HEK293 (cell line): ENCODE measurements at regions of chr11 and their contacts with region 1.

Region 1: DNA sequence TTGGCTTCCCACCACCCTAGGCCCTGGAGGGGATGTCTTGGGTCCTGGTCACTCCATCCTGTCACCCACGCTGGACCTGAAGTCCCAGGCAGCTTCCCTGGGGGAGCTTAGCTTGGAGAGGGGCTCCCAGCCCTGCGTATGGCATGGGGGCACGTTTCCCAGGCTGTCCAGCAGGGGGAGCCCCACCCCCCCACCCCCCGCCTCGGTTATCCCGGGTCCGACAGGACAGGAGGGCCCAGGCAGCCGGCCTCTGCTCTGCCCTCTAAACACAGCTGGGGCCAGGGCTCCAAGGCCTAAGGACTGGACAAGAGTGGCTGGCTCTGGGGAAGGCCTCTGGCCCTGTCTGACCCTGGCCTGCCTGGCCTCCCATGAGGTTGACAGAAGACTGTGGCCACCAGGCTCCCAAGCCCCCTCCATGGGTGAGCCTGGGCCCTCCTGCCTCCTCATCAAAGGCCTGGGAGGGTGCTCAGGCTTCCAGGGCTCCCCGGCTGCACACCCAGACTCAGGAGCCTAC is 104.8 kb downstream of the NECTIN1 start:
- H3K4me3 ChIP-seq: no peak overlapping the region
- H3K27ac ChIP-seq: no peak overlapping the region
- H3K4me1 ChIP-seq: no peaks in the 10 kb centered on the region
- CTCF ChIP-seq: peak; percentile 33; the same call in 1 of the 2 replicates

Region 2: GRCh38 chr11:119634301-119634700 is 10.1 kb after region 1 on chr11:
- CTCF ChIA-PET with region 1: interaction called, 15 read pairs
- POLR2A ChIA-PET with region 1: no interaction called
- H3K4me3 ChIP-seq: no peak overlapping the region
- H3K27ac ChIP-seq: no peak overlapping the region
- H3K4me1 ChIP-seq: no peaks in the 10 kb centered on the region
- CTCF ChIP-seq: no peak

Region 3: DNA sequence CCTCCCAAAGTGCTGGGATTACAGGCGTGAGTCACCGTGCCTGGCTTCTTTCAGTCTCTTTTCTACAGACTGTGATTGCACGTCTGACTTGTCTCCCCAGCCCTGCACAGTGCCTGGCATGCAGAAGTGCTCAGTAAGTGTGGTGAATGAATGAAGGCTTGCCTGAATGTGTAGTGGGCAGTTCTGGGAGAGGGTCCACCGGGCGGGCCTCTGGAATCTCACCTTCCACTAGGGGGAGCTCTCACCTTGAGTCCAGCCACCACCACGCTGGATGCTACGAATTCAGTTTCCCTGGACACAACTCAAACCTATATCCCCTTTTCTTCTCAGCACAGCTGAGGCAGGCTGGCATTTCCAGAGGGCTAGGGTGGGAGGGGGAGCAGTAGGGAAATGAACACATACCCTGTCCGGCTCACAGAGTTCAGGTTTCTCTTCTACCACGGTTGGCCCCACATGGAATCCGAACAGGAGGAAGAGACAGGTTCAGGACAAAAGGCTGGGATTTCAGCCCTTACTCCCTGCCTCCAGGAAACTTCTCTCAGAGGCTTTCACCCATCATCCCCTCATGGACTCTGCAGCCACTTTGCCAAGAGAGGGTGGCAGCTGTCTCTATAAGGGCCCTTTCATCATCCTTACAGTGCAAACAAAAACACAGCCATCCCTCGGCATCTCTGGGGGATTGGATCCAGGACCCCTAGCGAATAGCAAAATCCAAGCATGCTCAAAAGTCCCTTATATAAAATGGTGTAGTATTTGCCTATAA is 18.0 kb after region 1 on chr11:
- CTCF ChIA-PET with region 1: interaction called, 18 read pairs
- POLR2A ChIA-PET with region 1: no interaction called
- H3K4me3 ChIP-seq: no peak overlapping the region
- H3K27ac ChIP-seq: no peak overlapping the region
- H3K4me1 ChIP-seq: no peaks in the 10 kb centered on the region
- CTCF ChIP-seq: peak; percentile 43